Activated CD4-positive, alpha-beta memory T cell treated with anti-CD3 and anti-CD28 coated beads for 36 hours (primary cell): ENCODE measurements at regions of chr9 and their contacts with region 1.

Region 1: GRCh38 chr9:6715755-6716643 is 41.8 kb upstream of the KDM4C start:
- DNase-seq: peak; percentile 84
- H3K4me3 Mint-ChIP-seq: peak overlapping the region; percentile 84
- H3K27ac Mint-ChIP-seq: peak overlapping the region; percentile 91
- H3K4me1 Mint-ChIP-seq: peaks cover 5% of the 10 kb centered on the region
- H3K27me3 Mint-ChIP-seq: no peaks in the 10 kb centered on the region

Region 2: GRCh38 chr9:6703898-6704639 is 11.9 kb before region 1 on chr9:
- CTCF ChIA-PET with region 1: interaction called, 5 read pairs
- POLR2A ChIA-PET with region 1: interaction called, 8 read pairs
- intact Hi-C with region 1: loop called (anchors 1 kb)
- DNase-seq: peak; percentile 82
- H3K4me3 Mint-ChIP-seq: peak overlapping the region; percentile 82
- H3K27ac Mint-ChIP-seq: peak overlapping the region; percentile 75
- H3K4me1 Mint-ChIP-seq: peaks cover 9% of the 10 kb centered on the region
- H3K27me3 Mint-ChIP-seq: no peaks in the 10 kb centered on the region